Psoas muscle (tissue), 8 donors: ENCODE measurements at regions of chr4 and their contacts with region 1.

Region 1: DNA sequence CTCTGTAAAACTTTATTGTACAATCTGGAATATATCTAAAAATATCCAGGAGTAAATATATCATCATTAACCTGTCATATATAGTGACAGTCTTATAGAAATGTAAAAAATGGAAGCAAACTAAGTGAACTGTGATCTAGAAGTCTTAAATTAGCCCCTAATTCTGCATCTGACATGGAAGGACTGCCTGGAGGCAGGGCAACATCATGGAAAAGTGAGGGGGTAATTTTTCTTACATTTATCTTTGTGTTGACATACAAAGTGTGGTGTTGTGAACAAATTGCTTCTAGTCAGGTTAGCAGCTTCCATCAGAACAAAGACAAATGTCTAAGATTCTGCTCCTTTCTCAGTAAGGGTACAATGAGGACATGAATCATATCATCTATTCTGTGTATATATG is 186.3 kb downstream of the C4orf33 start:
- DNase-seq: no peak
- ATAC-seq: no peak
- H3K4me3 ChIP-seq: no peak overlapping the region
- H3K27ac ChIP-seq: no peak overlapping the region
- H3K4me1 ChIP-seq: no peaks in the 10 kb centered on the region
- H3K27me3 ChIP-seq: no peaks in the 10 kb centered on the region
- CTCF ChIP-seq: no peak

Region 2: GRCh38 chr4:129064717-129065116 is 217.6 kb before region 1 on chr4:
- intact Hi-C with region 1: no loop called
- DNase-seq: no peak
- ATAC-seq: no peak
- H3K4me3 ChIP-seq: no peak overlapping the region
- H3K27ac ChIP-seq: no peak overlapping the region
- H3K4me1 ChIP-seq: no peaks in the 10 kb centered on the region
- H3K27me3 ChIP-seq: no peaks in the 10 kb centered on the region
- CTCF ChIP-seq: no peak

Region 3: DNA sequence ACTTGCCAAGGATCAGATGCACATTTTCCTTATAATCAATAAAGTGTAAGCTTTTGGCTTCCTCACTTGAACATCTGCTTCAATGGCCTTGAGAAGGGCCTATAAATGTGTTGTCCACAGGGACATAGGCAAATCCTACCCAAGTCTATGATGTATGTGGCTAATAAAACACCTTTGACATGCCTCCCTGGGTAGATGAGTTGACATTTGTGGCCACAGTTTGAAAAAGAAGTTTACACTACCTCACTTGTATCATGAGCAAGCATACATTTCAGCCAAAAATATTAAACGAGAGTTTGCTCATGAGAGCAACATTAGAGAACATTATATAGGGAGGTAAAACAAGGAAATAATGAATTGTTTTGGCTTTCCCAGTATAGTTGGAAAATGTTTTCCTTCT is 881.4 kb after region 1 on chr4:
- intact Hi-C with region 1: loop called in 1 of 2 experiments (anchors 10 kb)
- DNase-seq: no peak
- ATAC-seq: no peak
- H3K4me3 ChIP-seq: no peak overlapping the region
- H3K27ac ChIP-seq: no peak overlapping the region
- H3K4me1 ChIP-seq: no peaks in the 10 kb centered on the region
- H3K27me3 ChIP-seq: no peaks in the 10 kb centered on the region
- CTCF ChIP-seq: no peak